AG04449 (cell line): ENCODE measurements at regions of chr12 and their contacts with region 1.

Region 1: DNA sequence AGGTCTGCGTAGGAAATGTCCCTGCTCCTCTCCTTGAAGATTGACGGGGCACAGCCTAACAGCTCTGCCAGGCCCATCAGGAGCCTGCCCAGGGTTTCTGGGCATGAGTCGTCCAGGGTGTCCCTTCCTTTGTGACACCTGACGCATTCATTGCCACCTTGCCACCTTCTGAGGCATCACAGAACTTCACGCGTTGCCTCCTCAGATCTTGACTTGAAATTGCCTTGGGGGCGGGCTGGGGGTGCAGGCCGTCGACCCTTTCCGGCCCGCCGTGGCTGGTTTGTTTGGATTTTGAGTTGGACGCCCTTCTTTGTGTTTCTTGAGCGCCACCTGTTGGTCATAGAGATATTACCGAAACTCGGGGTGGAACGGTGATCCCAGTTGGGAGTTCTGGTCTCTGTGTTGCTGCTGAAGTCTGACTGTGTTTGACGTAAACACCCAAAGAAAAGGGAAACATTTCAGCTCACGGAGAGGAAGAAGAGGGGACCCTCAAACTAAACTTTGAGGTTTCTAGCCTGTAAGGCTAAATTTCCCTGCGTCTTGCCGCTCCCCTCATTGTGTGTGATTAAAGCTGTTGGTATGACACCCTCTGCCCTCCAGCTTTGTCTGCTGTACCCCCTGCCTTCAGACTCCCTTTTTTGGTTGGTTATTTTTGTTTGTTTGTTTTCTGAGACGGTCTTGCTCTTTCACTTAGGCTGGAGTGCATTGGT is 44.6 kb downstream of the MLXIP start:
- DNase-seq: no peak
- H3K4me3 ChIP-seq: no peak overlapping the region; the same call in 1 of the 2 replicates
- CTCF ChIP-seq: peak; percentile 59

Region 2: GRCh38 chr12:121461048-121461447 is 662.2 kb before region 1 on chr12:
- CTCF ChIA-PET with region 1: no interaction called
- POLR2A ChIA-PET with region 1: no interaction called
- DNase-seq: no peak
- H3K4me3 ChIP-seq: no peak overlapping the region
- CTCF ChIP-seq: no peak

Region 3: GRCh38 chr12:121917979-121918678 is 205.1 kb before region 1 on chr12 and contains the start of gene CFAP251:
- CTCF ChIA-PET with region 1: interaction called, 43 read pairs
- POLR2A ChIA-PET with region 1: no interaction called
- DNase-seq: peak; percentile 21
- H3K4me3 ChIP-seq: peak within 1 kb of the TSS; percentile 48
- CTCF ChIP-seq: peak; percentile 86

Region 4: DNA sequence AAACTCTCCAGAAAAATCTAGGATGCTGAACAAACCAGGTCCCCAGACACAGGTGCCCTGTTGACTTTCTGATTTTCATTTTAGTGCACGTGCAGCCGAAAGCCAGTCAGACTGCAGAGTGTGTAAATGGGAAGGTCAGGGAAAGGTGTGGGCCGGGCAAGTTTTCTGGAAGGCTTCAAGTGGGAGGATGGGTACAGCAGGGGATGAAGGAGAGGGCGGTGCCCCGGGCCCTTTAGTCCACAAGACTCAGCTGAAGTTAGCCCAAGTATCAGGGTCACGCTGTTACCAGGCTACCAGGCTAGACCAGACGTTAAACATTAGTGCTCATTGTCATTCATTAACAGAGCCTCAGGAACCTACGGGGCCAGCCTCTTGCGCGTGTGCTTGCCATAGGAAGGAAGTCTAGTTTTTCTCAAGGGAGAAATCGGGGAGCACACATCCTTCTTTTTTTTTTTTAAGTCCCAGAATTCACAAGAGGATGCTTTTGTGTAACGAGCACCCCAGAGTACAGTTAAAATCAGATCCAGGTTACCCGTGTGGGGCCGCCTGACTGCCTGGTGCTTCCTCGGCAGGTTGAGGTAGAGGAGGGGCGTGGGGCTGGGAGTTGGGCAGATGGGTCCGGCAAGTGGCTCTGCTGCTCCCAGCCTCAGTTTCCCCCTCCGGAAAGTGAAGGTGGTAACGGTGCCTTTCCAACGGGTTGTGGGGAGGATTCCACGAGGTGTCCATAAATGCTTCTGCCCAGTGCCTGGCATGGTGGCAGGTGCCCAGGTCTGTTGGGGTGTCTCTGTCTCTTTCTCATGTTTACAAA is 82.4 kb before region 1 on chr12:
- CTCF ChIA-PET with region 1: interaction called, 504 read pairs
- POLR2A ChIA-PET with region 1: no interaction called
- DNase-seq: no peak
- H3K4me3 ChIP-seq: no peak overlapping the region
- CTCF ChIP-seq: no peak

Region 5: DNA sequence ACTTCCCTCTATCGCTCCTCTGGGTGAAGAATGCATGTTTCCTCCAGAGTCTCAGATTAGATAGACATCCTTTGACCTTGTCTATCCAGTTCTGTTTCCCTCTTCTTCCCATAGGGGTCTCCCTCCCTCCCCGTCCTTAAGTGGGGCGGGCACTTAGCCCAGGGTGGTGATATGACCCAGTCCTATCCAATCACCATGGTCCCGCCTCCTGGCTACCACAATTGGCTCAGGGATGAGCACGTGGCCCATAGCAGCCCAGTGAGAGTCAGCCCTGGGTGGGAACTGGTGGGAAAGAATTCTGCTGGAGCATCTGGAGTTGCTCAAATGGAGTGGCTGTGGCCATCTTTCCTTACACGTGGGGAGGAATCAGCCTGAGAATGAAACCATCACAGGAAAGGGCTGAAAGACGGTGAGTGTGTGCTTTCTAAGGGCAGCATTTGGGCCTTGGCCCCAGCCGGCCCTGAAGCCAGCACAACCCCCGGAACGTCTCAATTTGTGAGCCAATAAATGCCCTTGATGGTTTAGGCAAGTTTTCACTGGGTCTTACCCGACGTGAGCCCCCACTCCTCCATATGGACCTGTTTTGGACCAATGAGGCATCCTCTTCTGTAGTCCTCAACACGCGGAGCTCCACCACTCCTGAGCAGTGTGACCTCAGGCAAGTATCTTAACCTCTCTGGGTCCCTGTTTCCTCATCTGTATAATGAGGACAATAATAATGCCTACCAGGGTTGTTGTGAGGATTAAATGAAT is 59.0 kb before region 1 on chr12:
- CTCF ChIA-PET with region 1: interaction called, 504 read pairs
- POLR2A ChIA-PET with region 1: interaction called, 4 read pairs
- DNase-seq: peak; percentile 81
- H3K4me3 ChIP-seq: peak overlapping the region; percentile 37
- CTCF ChIP-seq: peak; percentile 52

Region 6: GRCh38 chr12:122078141-122079032 is 44.8 kb before region 1 on chr12 and contains the start of gene MLXIP:
- CTCF ChIA-PET with region 1: interaction called, 26 read pairs
- POLR2A ChIA-PET with region 1: interaction called, 5 read pairs
- DNase-seq: no peak
- H3K4me3 ChIP-seq: peak within 1 kb of the TSS; percentile 86
- CTCF ChIP-seq: no peak

Region 7: DNA sequence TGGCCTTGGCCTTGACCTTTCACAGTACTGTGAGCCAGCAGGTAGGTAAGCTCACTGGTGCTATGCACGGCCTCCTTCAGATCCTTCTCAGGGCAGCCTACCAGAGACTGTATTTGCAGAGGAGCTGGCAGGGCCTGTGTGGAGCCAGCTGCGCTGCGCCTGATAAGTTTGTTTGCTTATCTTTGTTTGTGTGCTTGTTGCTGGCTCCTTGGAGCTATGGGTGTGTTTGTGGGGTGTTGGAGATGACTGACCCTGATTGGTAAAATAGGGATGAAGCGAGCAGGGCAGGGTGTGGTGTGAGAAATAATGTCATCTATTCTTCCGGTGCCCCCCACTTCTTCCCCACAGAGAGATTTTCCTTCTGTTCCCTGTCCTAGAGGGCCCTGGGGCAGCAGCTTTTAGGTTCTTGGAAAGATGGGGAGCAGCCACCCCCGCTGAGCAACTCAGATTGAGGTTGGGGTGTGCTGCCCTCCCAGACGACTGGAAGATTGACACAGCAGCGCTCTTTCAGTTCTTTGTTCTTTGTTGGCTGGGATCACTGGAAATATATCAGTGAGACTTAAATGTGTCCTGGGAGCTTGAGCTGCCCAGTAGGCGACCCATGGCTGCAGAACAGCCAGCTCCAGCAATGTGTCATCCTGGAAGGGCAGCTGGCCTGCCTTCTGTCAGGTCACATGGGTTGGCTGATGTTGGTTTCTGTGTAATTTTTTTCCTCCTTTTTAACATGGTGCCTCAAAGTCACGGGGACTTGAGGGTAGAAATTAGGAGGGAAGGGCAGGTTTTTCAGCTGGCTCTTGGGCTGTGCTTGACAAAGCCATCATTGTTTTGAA is 25.1 kb before region 1 on chr12:
- CTCF ChIA-PET with region 1: interaction called, 33 read pairs
- POLR2A ChIA-PET with region 1: no interaction called
- DNase-seq: no peak
- H3K4me3 ChIP-seq: no peak overlapping the region
- CTCF ChIP-seq: no peak

Region 8: DNA sequence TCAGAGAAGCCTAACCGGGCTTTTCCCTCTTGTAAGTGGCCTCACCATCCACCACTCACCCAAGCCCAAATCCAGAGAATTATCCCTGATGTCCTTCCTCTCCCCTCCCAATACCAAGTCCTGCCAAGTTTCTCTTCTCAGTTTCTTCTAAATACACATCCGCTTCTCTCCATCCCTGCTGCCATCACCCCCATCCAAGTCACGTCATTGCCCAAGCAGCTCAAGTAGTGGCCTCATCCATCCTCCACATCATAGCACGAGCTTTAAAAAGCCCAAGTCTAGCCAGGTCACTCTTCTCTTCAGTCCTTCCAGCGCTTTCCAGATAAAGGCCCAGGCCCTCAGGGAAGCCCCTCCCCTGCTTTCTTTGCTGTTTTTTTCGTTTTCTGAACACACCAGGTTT is 25.5 kb after region 1 on chr12:
- CTCF ChIA-PET with region 1: interaction called, 11 read pairs
- POLR2A ChIA-PET with region 1: no interaction called
- DNase-seq: no peak
- H3K4me3 ChIP-seq: no peak overlapping the region
- CTCF ChIP-seq: no peak